Heart left ventricle (tissue), 16 donors: ENCODE measurements at regions of chr17 and their contacts with region 1.

Region 1: GRCh38 chr17:42193969-42194899 is at the start of gene GHDC:
- DNase-seq: peak; percentile 86 to 91 (median 88)
- ATAC-seq: peak; percentile 86 to 97 (median 96)
- H3K4me3 ChIP-seq: peak within 1 kb of the TSS; percentile 36 to 84 (median 75)
- H3K27ac ChIP-seq: peak within 1 kb of the TSS; percentile 45 to 94 (median 84)
- H3K4me1 ChIP-seq: peaks cover 4 to 31% (median 15%) of the 10 kb centered on the region in 12 donors
- H3K27me3 ChIP-seq: no peaks in the 10 kb centered on the region
- CTCF ChIP-seq: no peak
- POLR2A ChIP-seq: peak in 1 of 2 donors; percentile 40
- total RNA-seq, gene GHDC: 4.9 to 17.3 (median 8.3) TPM

Region 2: GRCh38 chr17:42287926-42288802 is 93.9 kb after region 1 on chr17 and contains the start of gene STAT5A:
- intact Hi-C with region 1: loop called in 1 of 10 experiments (anchors 10 kb)
- DNase-seq: peak; percentile 92 to 95 (median 94)
- ATAC-seq: peak; percentile 82 to 94 (median 92)
- H3K4me3 ChIP-seq: peak within 1 kb of the TSS; percentile 58 to 93 (median 72)
- H3K27ac ChIP-seq: peak within 1 kb of the TSS; percentile 79 to 97 (median 91)
- H3K4me1 ChIP-seq: peaks cover 0 to 61% (median 29%) of the 10 kb centered on the region in 12 donors
- H3K27me3 ChIP-seq: no peaks in the 10 kb centered on the region
- CTCF ChIP-seq: peak in 1 of 12 donors; percentile 5
- POLR2A ChIP-seq: peak in 1 of 2 donors; percentile 83
- total RNA-seq, gene STAT5A: 7.5 to 44.0 (median 15.7) TPM